ENCODE measurements at regions of chr2 and their contacts with region 1.

Region 1: GRCh38 chr2:70248181-70248847 is at the start of gene TIA1:
- DNase-seq: peak; percentile 98
- H3K4me3 Mint-ChIP-seq: peak within 1 kb of the TSS; percentile 95
- H3K27ac Mint-ChIP-seq: peak within 1 kb of the TSS; percentile 98
- H3K4me1 Mint-ChIP-seq: peaks cover 22% of the 10 kb centered on the region
- H3K27me3 Mint-ChIP-seq: no peaks in the 10 kb centered on the region
- total RNA-seq, gene TIA1: 113 TPM in 2 replicates

Region 2: DNA sequence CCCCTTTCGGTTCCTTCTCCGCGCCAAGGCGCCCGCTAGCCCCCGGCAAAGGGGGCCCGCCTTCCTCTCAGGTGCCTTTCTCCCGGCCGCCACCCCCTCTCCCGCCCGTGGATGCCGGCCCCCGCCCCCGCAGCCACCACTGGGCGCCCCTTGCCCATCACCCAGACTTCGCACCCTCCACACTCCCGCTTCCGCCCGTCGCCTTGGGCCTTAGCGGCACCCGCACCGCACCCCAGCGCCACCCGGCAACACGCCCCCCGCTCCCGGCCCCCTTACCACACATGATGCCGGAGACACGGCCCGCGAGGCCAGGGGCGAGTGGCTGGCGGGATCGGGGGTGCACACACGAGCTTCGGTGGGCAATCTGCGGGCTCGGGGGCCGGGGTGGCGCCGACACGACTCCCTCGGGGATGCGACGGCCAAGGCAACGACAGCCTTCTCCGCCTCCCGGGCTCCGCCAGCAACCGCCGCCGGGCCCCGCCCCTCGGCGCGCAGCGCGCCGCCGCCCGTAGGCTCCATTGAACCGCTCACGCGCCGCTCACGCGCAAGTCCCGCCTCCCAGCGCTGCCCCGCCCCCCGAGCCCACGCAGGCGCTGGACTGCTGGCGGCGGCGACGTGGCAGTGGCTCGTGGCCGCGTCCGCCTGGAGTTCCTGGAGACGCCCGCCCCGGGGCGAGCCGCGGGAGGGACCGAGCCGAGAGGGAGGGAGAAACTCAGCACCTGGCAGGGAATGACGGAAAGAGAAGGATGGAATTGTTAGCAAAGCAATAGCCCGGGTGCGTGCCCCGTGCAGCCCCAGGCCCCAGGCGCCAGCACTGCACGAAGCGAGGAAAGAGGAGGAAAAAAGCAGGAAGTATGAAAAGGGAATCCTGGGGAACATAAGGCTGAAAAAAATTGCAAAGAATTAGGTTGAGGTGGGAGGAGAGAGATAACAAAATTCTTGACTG is 861.3 kb before region 1 on chr2 and contains the start of gene GFPT1:
- intact Hi-C with region 1: loop called (anchors 5 kb)
- DNase-seq: peak; percentile 92
- H3K4me3 Mint-ChIP-seq: peak within 1 kb of the TSS; percentile 88
- H3K27ac Mint-ChIP-seq: peak within 1 kb of the TSS; percentile 92
- H3K4me1 Mint-ChIP-seq: peaks cover 41% of the 10 kb centered on the region
- H3K27me3 Mint-ChIP-seq: no peaks in the 10 kb centered on the region
- total RNA-seq, gene GFPT1: 55.7 and 56.6 TPM in 2 replicates

Region 3: GRCh38 chr2:70124983-70125480 is 123.3 kb before region 1 on chr2:
- intact Hi-C with region 1: no loop called
- DNase-seq: peak; percentile 55
- H3K4me3 Mint-ChIP-seq: peak overlapping the region; percentile 90
- H3K27ac Mint-ChIP-seq: peak overlapping the region; percentile 98
- H3K4me1 Mint-ChIP-seq: peaks cover 57% of the 10 kb centered on the region
- H3K27me3 Mint-ChIP-seq: no peaks in the 10 kb centered on the region

Region 4: DNA sequence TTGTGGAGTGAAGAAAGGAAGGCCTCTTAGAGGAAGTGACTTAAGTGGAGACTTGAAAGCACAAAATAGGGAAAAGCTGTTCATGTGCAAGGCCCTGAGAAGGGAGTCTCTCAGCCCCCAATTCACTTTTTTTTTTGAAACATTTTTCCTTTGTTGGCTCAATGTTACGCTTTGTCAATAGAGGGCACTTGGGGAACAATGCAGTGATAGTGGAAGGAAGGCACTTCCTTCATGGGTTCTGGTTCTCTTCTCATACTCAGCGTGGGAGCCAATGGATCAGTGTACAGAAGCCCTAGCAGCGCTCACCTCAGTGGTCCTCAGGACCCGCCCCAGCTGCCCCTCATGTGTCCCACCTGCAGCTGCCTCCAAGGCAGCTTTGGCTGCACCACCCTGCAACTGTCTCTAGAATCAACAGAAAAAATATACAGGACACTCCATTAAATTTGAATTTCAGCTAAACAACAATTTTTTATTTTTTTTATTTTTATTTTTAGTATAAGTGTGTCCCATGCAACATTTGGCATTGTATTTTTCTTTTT is 48.9 kb before region 1 on chr2:
- intact Hi-C with region 1: no loop called
- DNase-seq: no peak
- H3K4me3 Mint-ChIP-seq: no peak overlapping the region
- H3K27ac Mint-ChIP-seq: no peak overlapping the region
- H3K4me1 Mint-ChIP-seq: no peaks in the 10 kb centered on the region
- H3K27me3 Mint-ChIP-seq: peaks cover 3% of the 10 kb centered on the region

Region 5: GRCh38 chr2:70258532-70258874 is 10.2 kb after region 1 on chr2:
- intact Hi-C with region 1: loop called (anchors 1 kb)
- DNase-seq: no peak
- H3K4me3 Mint-ChIP-seq: peak overlapping the region; percentile 94
- H3K27ac Mint-ChIP-seq: no peak overlapping the region
- H3K4me1 Mint-ChIP-seq: peaks cover 32% of the 10 kb centered on the region
- H3K27me3 Mint-ChIP-seq: no peaks in the 10 kb centered on the region